Natural killer cell (primary cell): ENCODE measurements at regions of chr19 and their contacts with region 1.

Region 1: DNA sequence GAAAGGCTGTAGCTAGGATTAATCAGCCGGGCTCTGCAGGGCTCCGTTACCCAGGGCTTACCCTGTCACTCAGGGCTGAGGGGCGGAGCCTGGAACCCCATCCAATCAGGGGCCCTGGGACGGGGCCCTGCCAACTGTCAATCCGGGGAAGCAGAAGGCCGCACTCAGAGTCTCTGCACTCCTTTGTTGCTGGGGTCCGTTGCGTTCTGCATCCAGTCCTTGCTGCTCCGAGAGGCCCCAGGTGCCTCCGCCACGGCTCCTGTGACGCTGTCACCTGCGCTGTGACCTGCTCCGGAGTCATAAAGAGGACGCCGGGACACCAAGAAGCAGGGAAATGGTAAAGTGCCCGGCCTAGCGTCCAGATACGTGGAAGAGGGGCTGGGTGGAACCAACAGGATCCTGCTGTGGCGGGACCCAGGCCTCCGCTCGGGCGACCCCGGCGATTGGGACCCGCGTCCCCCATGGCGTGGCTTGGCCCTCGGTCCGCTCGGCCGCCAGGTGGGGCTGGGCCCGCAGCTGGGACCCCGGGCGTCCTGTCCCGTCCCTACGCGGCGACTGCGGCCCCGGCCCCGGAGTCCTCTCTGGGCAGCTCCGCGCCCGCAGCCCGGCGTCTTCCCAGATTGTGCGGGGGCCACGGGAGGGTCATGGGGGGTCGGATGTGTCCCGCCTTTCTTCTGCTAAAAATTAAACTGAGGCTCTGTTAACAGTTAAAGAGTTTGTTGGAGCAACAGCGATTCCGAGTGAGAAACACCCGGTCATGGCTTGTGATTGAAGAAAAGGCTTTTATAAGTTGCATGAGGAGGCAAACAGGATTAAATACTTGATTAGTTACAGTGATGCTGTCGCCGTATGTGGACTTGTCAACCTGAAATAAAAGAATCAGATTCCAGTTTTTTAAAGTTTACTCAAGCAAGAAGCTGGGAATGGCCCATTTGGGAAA is at the start of gene ZNF491:
- DNase-seq: peak; percentile 87
- ATAC-seq: peak; percentile 98 to 99 (median 98)
- H3K4me3 ChIP-seq: peak within 1 kb of the TSS; percentile 64
- H3K4me3 Mint-ChIP-seq: peak within 1 kb of the TSS; percentile 96
- H3K27ac ChIP-seq: peak within 1 kb of the TSS; percentile 60
- H3K27ac Mint-ChIP-seq: peak within 1 kb of the TSS; percentile 84 to 90
- H3K4me1 ChIP-seq: peaks cover 17% of the 10 kb centered on the region
- H3K4me1 Mint-ChIP-seq: peaks cover 16 to 22% of the 10 kb centered on the region in 2 donors
- H3K27me3 ChIP-seq: no peaks in the 10 kb centered on the region
- H3K27me3 Mint-ChIP-seq: no peaks in the 10 kb centered on the region
- CTCF ChIP-seq: peak; percentile 9
- total RNA-seq, gene ZNF491: 1.9 to 3.8 (median 3.7) TPM

Region 2: GRCh38 chr19:11766597-11767591 is 31.8 kb before region 1 on chr19 and contains the start of gene ZNF441:
- intact Hi-C with region 1: no loop called
- DNase-seq: peak; percentile 89 to 95
- ATAC-seq: peak; percentile 92 to 97 (median 96)
- H3K4me3 ChIP-seq: peak within 1 kb of the TSS; percentile 65
- H3K4me3 Mint-ChIP-seq: peak within 1 kb of the TSS; percentile 98
- H3K27ac ChIP-seq: peak within 1 kb of the TSS; percentile 83
- H3K27ac Mint-ChIP-seq: peak within 1 kb of the TSS; percentile 91 to 98
- H3K4me1 ChIP-seq: peaks cover 19% of the 10 kb centered on the region
- H3K4me1 Mint-ChIP-seq: peaks cover 28 to 30% of the 10 kb centered on the region in 2 donors
- H3K27me3 ChIP-seq: no peaks in the 10 kb centered on the region
- H3K27me3 Mint-ChIP-seq: peaks cover 0 to 3% of the 10 kb centered on the region in 2 donors
- CTCF ChIP-seq: no peak
- total RNA-seq, gene ZNF441: 6.5 to 9.6 (median 7.1) TPM

Region 3: DNA sequence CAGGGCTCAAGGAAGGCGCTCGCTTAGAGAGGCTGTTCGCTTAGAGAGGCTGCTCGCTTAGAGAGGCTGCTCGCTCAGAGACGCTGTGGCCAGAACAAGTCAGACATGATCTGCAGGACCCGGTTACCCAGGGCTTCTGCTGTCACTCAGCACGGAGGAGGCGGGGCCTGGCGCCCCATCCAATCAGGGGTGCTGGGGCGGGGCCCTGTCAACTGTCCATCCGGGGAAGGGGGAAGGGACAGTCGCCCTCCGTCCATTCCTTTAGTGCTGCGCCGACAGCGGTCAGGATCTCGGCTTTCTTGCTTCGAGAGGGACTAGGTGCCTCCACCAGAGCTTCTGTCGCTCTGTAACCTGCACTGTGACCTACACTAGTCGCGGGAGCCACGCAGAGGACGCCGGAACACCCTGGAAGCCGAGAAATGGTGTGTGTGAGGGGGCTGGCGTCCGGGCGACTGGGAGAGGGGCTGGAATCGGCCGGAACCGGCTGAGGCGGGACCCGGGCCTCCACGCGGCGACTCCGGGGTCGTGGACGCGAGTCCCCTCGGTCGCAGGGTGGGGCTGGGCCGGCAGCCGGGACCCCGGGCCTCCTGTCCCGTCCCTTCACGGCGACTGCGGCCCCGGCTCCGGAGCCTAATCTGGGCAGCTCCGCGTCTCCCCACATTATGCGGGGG is 15.5 kb after region 1 on chr19 and contains the start of gene ZNF440:
- intact Hi-C with region 1: loop called (anchors 1 kb)
- DNase-seq: peak; percentile 84 to 92
- ATAC-seq: peak; percentile 99 to 100 (median 99)
- H3K4me3 ChIP-seq: peak within 1 kb of the TSS; percentile 83
- H3K4me3 Mint-ChIP-seq: peak within 1 kb of the TSS; percentile 95
- H3K27ac ChIP-seq: peak within 1 kb of the TSS; percentile 55
- H3K27ac Mint-ChIP-seq: peak within 1 kb of the TSS; percentile 77 to 91
- H3K4me1 ChIP-seq: peaks cover 17% of the 10 kb centered on the region
- H3K4me1 Mint-ChIP-seq: peaks cover 25 to 32% of the 10 kb centered on the region in 2 donors
- H3K27me3 ChIP-seq: no peaks in the 10 kb centered on the region
- H3K27me3 Mint-ChIP-seq: no peaks in the 10 kb centered on the region
- CTCF ChIP-seq: no peak
- total RNA-seq, gene ZNF440: 21.8 to 37.4 (median 26.6) TPM

Region 4: DNA sequence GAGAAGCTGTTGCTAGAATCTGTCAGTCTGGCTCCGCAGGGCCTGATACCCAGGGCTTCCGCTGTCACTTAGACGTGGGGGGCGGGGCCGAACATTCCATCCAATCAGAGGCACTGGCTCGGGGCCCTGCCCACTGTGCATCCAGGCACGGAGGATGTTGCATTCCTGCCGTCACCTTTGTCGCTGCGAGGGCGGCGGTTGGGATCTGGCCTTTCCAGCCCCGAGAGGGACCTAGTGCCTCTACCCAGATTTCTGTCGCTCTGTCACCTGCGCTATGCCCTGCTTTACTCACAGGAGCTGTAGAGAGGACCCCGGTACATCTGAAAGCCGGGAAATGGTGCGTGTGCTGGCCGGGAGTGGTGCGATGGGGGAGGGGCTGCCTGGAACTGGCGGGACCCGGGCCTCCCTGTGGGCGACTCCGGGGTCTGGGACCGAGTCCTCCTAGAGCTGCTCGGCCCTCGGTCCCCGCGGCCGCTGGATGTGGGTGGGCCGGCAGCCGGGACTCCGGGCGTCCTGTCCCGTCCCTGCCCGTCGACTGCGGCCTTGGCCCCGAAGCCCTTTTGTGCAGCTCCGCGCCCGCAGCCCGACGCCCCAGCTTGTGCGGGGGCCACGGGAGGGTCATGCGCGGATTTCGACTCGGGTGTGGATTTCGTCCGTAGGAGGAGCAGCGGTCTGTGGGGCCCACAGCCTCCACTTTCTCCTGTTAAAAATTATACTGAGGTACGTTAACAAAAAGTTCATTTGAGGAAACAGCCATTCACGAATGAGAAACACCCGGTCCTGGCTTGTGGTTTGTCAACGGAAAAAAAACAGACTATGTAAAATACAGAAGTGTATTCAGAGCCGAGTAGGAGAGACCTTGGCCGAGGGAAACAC is 50.2 kb after region 1 on chr19 and contains the start of gene ZNF439:
- intact Hi-C with region 1: loop called (anchors 10 kb)
- DNase-seq: peak; percentile 90 to 91
- ATAC-seq: peak; percentile 99 to 100 (median 99)
- H3K4me3 ChIP-seq: peak within 1 kb of the TSS; percentile 65
- H3K4me3 Mint-ChIP-seq: peak within 1 kb of the TSS; percentile 90
- H3K27ac ChIP-seq: peak within 1 kb of the TSS; percentile 57
- H3K27ac Mint-ChIP-seq: peak within 1 kb of the TSS; percentile 74 to 91
- H3K4me1 ChIP-seq: peaks cover 10% of the 10 kb centered on the region
- H3K4me1 Mint-ChIP-seq: peaks cover 24 to 28% of the 10 kb centered on the region in 2 donors
- H3K27me3 ChIP-seq: no peaks in the 10 kb centered on the region
- H3K27me3 Mint-ChIP-seq: no peaks in the 10 kb centered on the region
- CTCF ChIP-seq: no peak
- total RNA-seq, gene ZNF439: 9.6 to 18.4 (median 15.4) TPM

Region 5: DNA sequence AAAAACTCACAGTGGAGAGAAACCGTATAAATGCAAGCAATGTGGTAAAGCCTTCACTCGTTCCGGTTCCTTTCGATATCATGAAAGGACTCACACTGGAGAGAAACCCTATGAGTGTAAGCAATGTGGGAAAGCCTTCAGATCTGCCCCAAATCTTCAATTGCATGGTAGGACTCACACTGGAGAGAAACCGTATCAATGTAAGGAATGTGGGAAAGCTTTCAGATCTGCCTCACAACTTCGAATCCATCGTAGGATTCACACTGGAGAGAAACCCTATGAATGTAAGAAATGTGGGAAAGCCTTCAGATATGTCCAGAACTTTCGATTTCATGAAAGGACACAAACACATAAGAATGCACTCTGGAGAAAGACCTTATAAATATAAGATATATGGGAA is 69.5 kb after region 1 on chr19:
- intact Hi-C with region 1: no loop called
- DNase-seq: no peak
- ATAC-seq: no peak
- H3K4me3 ChIP-seq: no peak overlapping the region
- H3K4me3 Mint-ChIP-seq: no peak overlapping the region
- H3K27ac ChIP-seq: no peak overlapping the region
- H3K27ac Mint-ChIP-seq: no peak overlapping the region
- H3K4me1 ChIP-seq: no peaks in the 10 kb centered on the region
- H3K4me1 Mint-ChIP-seq: no peaks in the 10 kb centered on the region
- H3K27me3 ChIP-seq: no peaks in the 10 kb centered on the region
- H3K27me3 Mint-ChIP-seq: no peaks in the 10 kb centered on the region
- CTCF ChIP-seq: no peak

Region 6: GRCh38 chr19:11881151-11881800 is 82.6 kb after region 1 on chr19:
- intact Hi-C with region 1: loop called (anchors 2 kb)
- DNase-seq: peak; percentile 43 to 84
- ATAC-seq: peak; percentile 59 to 84 (median 82)
- H3K4me3 ChIP-seq: no peak overlapping the region
- H3K4me3 Mint-ChIP-seq: no peak overlapping the region
- H3K27ac ChIP-seq: no peak overlapping the region
- H3K27ac Mint-ChIP-seq: no peak overlapping the region
- H3K4me1 ChIP-seq: peaks cover 3% of the 10 kb centered on the region
- H3K4me1 Mint-ChIP-seq: peaks cover 5 to 8% of the 10 kb centered on the region in 2 donors
- H3K27me3 ChIP-seq: no peaks in the 10 kb centered on the region
- H3K27me3 Mint-ChIP-seq: peaks cover 0 to 8% of the 10 kb centered on the region in 2 donors
- CTCF ChIP-seq: peak; percentile 73

Region 7: GRCh38 chr19:11987405-11988281 is 189.0 kb after region 1 on chr19:
- intact Hi-C with region 1: loop called (anchors 2 kb)
- DNase-seq: peak; percentile 88 to 93
- ATAC-seq: peak; percentile 93 to 96 (median 93)
- H3K4me3 ChIP-seq: peak overlapping the region; percentile 99
- H3K4me3 Mint-ChIP-seq: peak overlapping the region; percentile 97
- H3K27ac ChIP-seq: peak overlapping the region; percentile 89
- H3K27ac Mint-ChIP-seq: peak overlapping the region; percentile 94 to 95
- H3K4me1 ChIP-seq: peaks cover 23% of the 10 kb centered on the region
- H3K4me1 Mint-ChIP-seq: peaks cover 34 to 36% of the 10 kb centered on the region in 2 donors
- H3K27me3 ChIP-seq: no peaks in the 10 kb centered on the region
- H3K27me3 Mint-ChIP-seq: no peaks in the 10 kb centered on the region
- CTCF ChIP-seq: no peak

Region 8: DNA sequence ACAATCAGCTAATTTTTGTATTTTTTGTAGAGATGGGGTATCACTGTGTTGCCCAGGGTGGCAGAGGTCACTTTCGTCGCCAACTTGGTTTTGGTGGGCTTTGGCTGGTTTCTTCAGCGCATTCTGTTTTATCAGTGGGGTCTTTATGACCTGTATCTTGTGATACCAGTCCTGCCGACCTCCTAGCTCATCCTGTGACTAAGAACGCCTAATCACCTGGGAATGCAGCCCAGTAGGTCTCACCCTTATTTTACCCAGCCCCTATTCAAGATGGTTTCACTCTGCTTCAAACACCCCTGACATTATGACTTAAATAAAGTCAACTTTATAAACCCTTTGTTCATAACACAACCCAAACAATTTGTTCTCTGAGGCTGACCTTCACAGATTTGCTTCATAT is 257.1 kb after region 1 on chr19:
- intact Hi-C with region 1: loop called (anchors 5 kb)
- DNase-seq: no peak
- ATAC-seq: no peak
- H3K4me3 ChIP-seq: no peak overlapping the region
- H3K4me3 Mint-ChIP-seq: no peak overlapping the region
- H3K27ac ChIP-seq: no peak overlapping the region
- H3K27ac Mint-ChIP-seq: no peak overlapping the region
- H3K4me1 ChIP-seq: peaks cover 18% of the 10 kb centered on the region
- H3K4me1 Mint-ChIP-seq: peaks cover 12 to 18% of the 10 kb centered on the region in 2 donors
- H3K27me3 ChIP-seq: no peaks in the 10 kb centered on the region
- H3K27me3 Mint-ChIP-seq: peaks cover 7 to 11% of the 10 kb centered on the region in 2 donors
- CTCF ChIP-seq: no peak

Region 9: GRCh38 chr19:12139885-12140547 is 341.4 kb after region 1 on chr19 and contains the start of gene ZNF20:
- intact Hi-C with region 1: loop called (anchors 1 kb)
- DNase-seq: peak; percentile 90 to 92
- ATAC-seq: peak; percentile 95 to 98 (median 96)
- H3K4me3 ChIP-seq: peak within 1 kb of the TSS; percentile 76
- H3K4me3 Mint-ChIP-seq: peak within 1 kb of the TSS; percentile 95
- H3K27ac ChIP-seq: peak within 1 kb of the TSS; percentile 56
- H3K27ac Mint-ChIP-seq: peak within 1 kb of the TSS; percentile 79 to 90
- H3K4me1 ChIP-seq: peaks cover 27% of the 10 kb centered on the region
- H3K4me1 Mint-ChIP-seq: peaks cover 35 to 38% of the 10 kb centered on the region in 2 donors
- H3K27me3 ChIP-seq: no peaks in the 10 kb centered on the region
- H3K27me3 Mint-ChIP-seq: no peaks in the 10 kb centered on the region
- CTCF ChIP-seq: no peak
- total RNA-seq, gene ZNF20: 4.2 to 9.0 (median 4.6) TPM